ENCODE measurements at regions of chr1 and their contacts with region 1.

Region 1: DNA sequence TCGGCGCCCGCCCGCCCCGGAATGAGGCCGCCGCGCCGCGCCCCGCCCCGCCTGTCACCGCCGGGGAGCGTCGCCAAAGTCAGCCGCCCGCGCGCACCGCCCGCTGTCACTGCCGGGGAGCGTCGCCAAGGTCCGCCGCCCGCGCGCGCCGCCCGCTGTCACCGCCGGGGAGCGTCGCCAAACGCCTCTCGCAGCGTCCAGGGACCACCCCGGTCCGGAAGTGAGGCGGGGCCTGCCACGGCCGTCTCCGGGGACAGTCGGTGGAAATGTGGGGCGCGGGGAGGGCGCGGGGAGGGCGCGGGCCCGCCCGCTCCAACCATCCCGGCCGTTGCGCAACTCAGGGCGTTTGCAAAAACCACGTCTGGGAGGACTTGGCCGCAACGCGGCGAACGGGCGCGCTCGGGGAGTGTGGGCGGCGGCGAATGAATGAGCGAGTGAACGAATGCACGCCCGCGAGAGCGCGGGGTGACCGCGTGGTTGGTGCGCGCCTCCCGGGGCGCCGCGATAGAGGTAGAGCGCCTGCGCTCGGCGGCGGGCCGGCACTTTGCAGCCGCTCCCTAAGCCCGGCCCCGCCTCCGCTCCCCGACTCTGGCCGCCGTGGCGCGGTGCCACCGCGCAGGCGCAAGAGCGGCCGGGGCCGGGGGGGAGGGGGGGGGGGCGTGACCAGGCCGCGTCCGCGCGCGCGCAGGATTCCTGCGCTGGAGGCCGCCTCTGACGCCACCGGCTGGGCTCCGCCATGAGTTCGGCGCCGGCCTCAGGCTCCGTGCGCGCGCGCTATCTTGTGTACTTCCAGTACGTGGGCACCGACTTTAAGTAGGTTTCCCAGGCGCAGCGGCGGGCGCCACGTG is at the starts of genes ACAP3 and PUSL1:
- DNase-seq: peak; percentile 79 to 96 (median 87)
- ATAC-seq: peak; percentile 72
- H3K4me3 ChIP-seq: peak within 1 kb of the TSS; percentile 59 to 94
- H3K4me3 Mint-ChIP-seq: peak within 1 kb of the TSS; percentile 87
- H3K27ac ChIP-seq: peak within 1 kb of the TSS; percentile 79 to 82
- H3K27ac Mint-ChIP-seq: peak within 1 kb of the TSS; percentile 90
- H3K4me1 ChIP-seq: peaks cover 35% of the 10 kb centered on the region
- H3K4me1 Mint-ChIP-seq: peaks cover 20% of the 10 kb centered on the region
- H3K27me3 ChIP-seq: no peaks in the 10 kb centered on the region
- H3K27me3 Mint-ChIP-seq: no peaks in the 10 kb centered on the region
- CTCF ChIP-seq: no peak
- total RNA-seq, gene ACAP3: 46.6 to 47.5 TPM
- total RNA-seq, gene PUSL1: 17.1 to 17.5 TPM

Region 2: DNA sequence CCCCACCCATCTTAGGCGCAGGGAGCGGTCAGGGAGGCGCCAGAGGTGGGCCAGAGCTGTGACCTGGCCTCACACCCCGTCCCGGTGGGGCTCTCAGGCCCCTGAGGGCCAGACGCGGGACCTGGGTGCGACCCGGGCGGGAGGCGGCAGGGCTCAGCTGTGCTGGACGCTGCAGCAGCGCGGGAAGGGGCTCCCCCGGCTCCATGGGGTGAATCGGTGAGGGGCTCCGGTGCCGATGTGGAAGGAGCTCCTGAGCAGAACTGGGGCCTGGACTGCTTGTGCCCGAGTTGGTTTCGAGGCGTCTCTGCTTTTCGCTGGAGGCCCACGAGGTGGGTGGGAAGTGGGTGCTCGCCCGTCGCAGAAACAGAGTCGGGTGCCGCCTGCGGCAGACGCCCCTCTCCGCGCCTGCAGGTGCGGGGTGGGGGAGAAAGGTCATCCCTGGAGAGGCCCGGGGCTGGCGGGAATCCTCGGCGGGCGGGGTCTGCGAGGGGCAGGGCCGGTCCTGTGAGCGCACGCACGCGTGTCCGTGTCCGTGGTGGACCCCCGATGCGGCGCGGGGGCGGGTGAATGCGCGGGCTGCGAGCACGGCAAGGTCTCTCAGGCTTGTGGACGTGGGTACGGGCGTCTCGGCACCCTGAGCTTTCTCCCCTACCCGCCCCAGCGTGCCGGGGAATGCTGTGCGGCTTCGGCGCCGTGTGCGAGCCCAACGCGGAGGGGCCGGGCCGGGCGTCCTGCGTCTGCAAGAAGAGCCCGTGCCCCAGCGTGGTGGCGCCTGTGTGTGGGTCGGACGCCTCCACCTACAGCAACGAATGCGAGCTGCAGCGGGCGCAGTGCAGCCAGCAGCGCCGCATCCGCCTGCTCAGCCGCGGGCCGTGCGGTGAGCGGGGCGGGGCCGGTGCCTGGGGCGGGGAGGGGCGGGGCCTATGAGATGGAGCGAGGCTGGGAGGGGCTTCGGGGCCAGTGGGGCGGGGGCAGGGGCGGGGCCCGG is 267.8 kb before region 1 on chr1:
- CTCF ChIA-PET with region 1: no interaction called
- POLR2A ChIA-PET with region 1: no interaction called
- intact Hi-C with region 1: loop called in 1 of 2 experiments (anchors 5 kb)
- DNase-seq: peak; percentile 67 to 94 (median 81)
- ATAC-seq: peak; percentile 94
- H3K4me3 ChIP-seq: peak overlapping the region; percentile 33 to 57
- H3K4me3 Mint-ChIP-seq: peak overlapping the region; percentile 72
- H3K27ac ChIP-seq: no peak overlapping the region
- H3K27ac Mint-ChIP-seq: no peak overlapping the region
- H3K4me1 ChIP-seq: peaks cover 21% of the 10 kb centered on the region
- H3K4me1 Mint-ChIP-seq: peaks cover 14% of the 10 kb centered on the region
- H3K27me3 ChIP-seq: peaks cover 0 to 6% of the 10 kb centered on the region in 2 experiments
- H3K27me3 Mint-ChIP-seq: peaks cover 19% of the 10 kb centered on the region
- CTCF ChIP-seq: no peak

Region 3: GRCh38 chr1:1206376-1207260 is 101.5 kb before region 1 on chr1 and contains the start of gene TNFRSF18:
- CTCF ChIA-PET with region 1: no interaction called
- POLR2A ChIA-PET with region 1: no interaction called
- intact Hi-C with region 1: loop called in 1 of 2 experiments (anchors 5 kb)
- DNase-seq: peak in 3 of 9 experiments; percentile 31 to 59 (median 58)
- ATAC-seq: no peak
- H3K4me3 ChIP-seq: peak within 1 kb of the TSS; percentile 27 to 33
- H3K4me3 Mint-ChIP-seq: peak within 1 kb of the TSS; percentile 58
- H3K27ac ChIP-seq: no peak within 1 kb of the TSS
- H3K27ac Mint-ChIP-seq: no peak within 1 kb of the TSS
- H3K4me1 ChIP-seq: peaks cover 33% of the 10 kb centered on the region
- H3K4me1 Mint-ChIP-seq: peaks cover 18% of the 10 kb centered on the region
- H3K27me3 ChIP-seq: peaks cover 0 to 15% of the 10 kb centered on the region in 2 experiments
- H3K27me3 Mint-ChIP-seq: peaks cover 4% of the 10 kb centered on the region
- CTCF ChIP-seq: no peak
- total RNA-seq, gene TNFRSF18: 4.2 to 4.6 TPM

Region 4: GRCh38 chr1:1225238-1225845 is 82.8 kb before region 1 on chr1:
- CTCF ChIA-PET with region 1: no interaction called
- POLR2A ChIA-PET with region 1: no interaction called
- intact Hi-C with region 1: no loop called
- DNase-seq: no peak
- ATAC-seq: no peak
- H3K4me3 ChIP-seq: no peak overlapping the region
- H3K4me3 Mint-ChIP-seq: no peak overlapping the region
- H3K27ac ChIP-seq: no peak overlapping the region
- H3K27ac Mint-ChIP-seq: no peak overlapping the region
- H3K4me1 ChIP-seq: peaks cover 12% of the 10 kb centered on the region
- H3K4me1 Mint-ChIP-seq: peaks cover 22% of the 10 kb centered on the region
- H3K27me3 ChIP-seq: no peaks in the 10 kb centered on the region
- H3K27me3 Mint-ChIP-seq: no peaks in the 10 kb centered on the region
- CTCF ChIP-seq: no peak

Region 5: DNA sequence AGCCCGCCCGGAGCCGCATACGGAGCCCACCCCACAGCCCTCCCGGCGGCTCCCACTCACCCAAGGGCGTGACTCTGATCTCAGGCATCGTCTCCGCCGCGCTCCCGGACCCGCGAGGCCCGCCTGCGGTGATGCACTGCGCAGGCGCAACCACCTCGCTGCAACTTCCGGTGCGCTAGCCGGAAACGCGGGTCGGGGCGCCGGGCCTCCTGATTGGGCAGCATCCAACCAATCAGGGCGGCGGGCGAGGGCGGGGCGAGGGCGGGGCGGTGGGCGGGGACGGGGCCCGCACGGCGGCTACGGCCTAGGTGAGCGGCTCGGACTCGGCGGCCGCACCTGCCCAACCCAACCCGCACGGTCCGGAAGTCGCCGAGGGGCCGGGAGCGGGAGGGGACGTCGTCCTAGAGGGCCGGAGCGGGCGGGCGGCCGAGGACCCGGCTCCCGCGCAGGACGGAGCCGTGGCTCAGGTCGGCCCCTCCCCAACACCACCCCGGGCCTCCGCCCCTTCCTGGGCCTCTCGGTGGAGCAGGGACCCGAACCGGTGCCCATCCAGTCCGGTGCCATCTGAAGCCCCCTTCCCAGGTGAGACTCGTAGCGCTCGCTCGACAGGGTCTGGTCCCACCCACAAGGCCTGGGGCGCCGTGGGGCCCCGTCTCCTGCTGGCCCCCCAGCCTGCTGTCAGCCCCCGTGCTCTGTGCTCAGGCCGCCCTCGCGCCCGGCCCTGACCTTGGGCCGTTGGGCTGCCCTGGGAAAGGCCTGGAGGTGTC is 16.6 kb after region 1 on chr1 and contains the starts of genes CPTP and INTS11:
- CTCF ChIA-PET with region 1: no interaction called
- POLR2A ChIA-PET with region 1: no interaction called
- intact Hi-C with region 1: loop called (anchors 1 kb)
- DNase-seq: peak; percentile 89 to 98 (median 96)
- ATAC-seq: peak; percentile 86
- H3K4me3 ChIP-seq: peak within 1 kb of the TSS; percentile 60 to 77
- H3K4me3 Mint-ChIP-seq: peak within 1 kb of the TSS; percentile 89
- H3K27ac ChIP-seq: peak within 1 kb of the TSS; percentile 73
- H3K27ac Mint-ChIP-seq: peak within 1 kb of the TSS; percentile 89
- H3K4me1 ChIP-seq: peaks cover 35% of the 10 kb centered on the region
- H3K4me1 Mint-ChIP-seq: peaks cover 35% of the 10 kb centered on the region
- H3K27me3 ChIP-seq: no peaks in the 10 kb centered on the region
- H3K27me3 Mint-ChIP-seq: no peaks in the 10 kb centered on the region
- CTCF ChIP-seq: no peak
- total RNA-seq, gene CPTP: 7.3 to 7.9 TPM
- total RNA-seq, gene INTS11: 139 to 156 TPM

Region 6: DNA sequence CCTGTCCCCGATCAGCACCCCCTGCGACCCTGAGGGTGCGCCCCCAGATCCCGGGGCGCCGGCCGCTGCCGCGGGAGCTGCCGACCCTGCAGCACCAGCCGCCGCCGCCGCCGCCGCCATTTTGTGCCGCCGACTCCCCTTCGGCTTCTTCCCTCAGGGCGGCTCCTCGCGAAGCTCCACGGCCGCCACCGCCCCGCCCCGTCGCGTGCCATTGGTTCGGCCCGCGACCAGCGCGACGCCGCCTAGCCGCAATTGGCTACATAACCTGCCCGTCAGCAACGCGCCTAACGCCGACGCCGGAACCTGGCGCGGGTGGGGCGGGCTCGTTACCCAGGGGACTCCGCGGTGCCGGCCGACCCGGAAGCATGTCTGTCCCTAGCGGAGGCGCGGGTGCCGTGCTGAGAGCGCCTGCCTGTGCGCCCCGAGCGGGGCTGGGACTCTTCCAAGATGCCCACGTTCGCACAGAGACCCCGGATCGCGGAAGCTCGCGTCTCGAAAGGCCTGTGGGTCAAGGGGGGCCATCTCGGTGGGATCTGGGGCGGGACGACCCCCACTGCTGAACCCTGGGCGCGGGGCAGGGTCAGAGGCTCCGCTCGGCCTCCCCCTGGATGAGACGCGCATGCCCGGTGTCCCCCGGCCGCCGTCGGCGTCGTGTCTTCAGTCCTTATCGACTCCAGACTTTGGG is 91.2 kb after region 1 on chr1 and contains the start of gene CCNL2:
- CTCF ChIA-PET with region 1: no interaction called
- POLR2A ChIA-PET with region 1: interaction called, 3 read pairs
- intact Hi-C with region 1: loop called in 1 of 2 experiments (anchors 2 kb)
- DNase-seq: peak; percentile 99 to 100 (median 99)
- ATAC-seq: peak; percentile 95
- H3K4me3 ChIP-seq: peak within 1 kb of the TSS; percentile 92 to 96
- H3K4me3 Mint-ChIP-seq: peak within 1 kb of the TSS; percentile 89
- H3K27ac ChIP-seq: peak within 1 kb of the TSS; percentile 81 to 92
- H3K27ac Mint-ChIP-seq: peak within 1 kb of the TSS; percentile 89
- H3K4me1 ChIP-seq: peaks cover 30% of the 10 kb centered on the region
- H3K4me1 Mint-ChIP-seq: peaks cover 45% of the 10 kb centered on the region
- H3K27me3 ChIP-seq: no peaks in the 10 kb centered on the region
- H3K27me3 Mint-ChIP-seq: no peaks in the 10 kb centered on the region
- CTCF ChIP-seq: peak; percentile 55
- total RNA-seq, gene CCNL2: 307 to 328 TPM